ENCODE measurements at regions of chr22 and their contacts with region 1.

Region 1: GRCh38 chr22:19909350-19910179 is 32.0 kb upstream of the COMT start:
- DNase-seq: peak; percentile 88
- ATAC-seq: peak; percentile 87
- H3K4me3 Mint-ChIP-seq: no peak overlapping the region
- H3K27ac Mint-ChIP-seq: peak overlapping the region; percentile 12
- H3K4me1 Mint-ChIP-seq: no peaks in the 10 kb centered on the region
- H3K27me3 Mint-ChIP-seq: no peaks in the 10 kb centered on the region

Region 2: DNA sequence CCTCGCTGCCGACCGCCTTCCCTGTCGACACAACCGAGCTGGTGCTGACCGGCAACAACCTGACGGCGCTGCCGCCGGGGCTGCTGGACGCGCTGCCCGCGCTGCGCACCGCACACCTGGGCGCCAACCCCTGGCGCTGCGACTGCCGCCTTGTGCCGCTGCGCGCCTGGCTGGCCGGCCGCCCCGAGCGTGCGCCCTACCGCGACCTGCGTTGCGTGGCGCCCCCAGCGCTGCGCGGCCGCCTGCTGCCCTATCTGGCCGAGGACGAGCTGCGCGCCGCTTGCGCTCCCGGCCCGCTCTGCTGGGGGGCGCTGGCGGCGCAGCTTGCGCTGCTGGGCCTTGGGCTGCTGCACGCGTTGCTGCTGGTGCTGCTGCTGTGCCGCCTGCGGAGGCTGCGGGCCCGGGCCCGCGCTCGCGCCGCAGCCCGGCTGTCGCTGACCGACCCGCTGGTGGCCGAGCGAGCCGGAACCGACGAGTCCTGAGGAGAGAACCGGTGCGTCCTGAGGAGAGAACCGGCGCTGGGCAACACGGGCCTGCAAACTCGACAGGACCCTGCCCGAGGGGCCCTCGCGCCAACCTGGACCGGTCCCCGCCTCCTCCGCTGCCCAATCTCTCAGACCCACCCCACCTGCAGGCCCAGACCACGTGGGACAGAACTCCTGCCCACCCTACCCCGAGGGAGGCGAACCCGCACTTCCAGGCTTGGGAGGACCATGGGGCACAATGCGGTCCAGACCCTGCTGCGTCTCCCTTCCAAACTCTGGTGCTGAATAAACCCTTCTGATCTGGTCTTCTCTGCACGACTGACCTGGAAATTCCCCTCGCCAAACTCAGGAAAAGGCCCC is 185.4 kb before region 1 on chr22:
- CTCF ChIA-PET with region 1: interaction called, 10 read pairs
- POLR2A ChIA-PET with region 1: no interaction called
- DNase-seq: peak; percentile 38
- ATAC-seq: peak; percentile 71
- H3K4me3 Mint-ChIP-seq: peak overlapping the region; percentile 29
- H3K27ac Mint-ChIP-seq: no peak overlapping the region
- H3K4me1 Mint-ChIP-seq: peaks cover 9% of the 10 kb centered on the region
- H3K27me3 Mint-ChIP-seq: peaks cover 36% of the 10 kb centered on the region

Region 3: DNA sequence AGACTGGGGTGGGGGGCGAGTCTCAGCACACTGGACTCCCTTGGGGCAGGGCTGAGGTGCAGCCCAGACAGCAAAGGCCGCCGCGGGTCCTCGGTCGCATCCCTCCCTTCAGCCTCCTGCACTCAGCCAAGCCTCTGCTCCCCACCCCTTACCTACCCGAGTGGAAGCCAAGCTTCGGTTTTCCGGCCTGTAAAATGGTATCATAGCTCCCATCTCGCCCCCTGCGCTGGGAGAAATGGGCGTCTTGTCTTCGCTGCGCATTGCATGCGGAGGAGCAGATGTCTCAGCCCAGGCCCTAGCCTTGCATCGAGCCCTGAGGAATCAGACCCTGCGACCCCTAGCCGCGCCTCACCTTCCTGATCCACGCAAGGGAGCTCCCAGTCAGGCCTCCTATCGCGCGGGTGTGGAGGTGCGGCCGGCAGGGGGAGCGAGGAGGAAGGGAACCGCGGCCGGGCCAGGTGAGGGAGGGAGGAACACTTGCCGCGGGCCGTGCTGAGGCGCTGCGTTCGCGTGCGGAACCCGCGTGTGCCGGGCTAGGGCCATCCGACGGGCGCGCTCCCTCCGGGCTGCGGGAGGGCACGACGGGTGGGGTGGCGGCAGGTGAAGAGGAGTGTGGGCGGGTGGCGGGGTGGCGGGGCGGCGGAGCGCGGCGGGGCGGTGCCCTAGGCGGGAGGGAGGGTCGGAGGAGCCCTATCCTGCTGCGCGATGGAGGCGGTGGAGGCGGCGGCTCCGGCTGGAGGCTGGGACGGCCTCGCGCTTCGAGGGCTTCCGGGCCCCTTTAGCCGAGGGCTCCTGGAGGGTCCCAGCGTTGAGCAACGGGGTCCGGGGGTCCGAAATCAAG is 153.1 kb before region 1 on chr22:
- CTCF ChIA-PET with region 1: interaction called, 20 read pairs
- POLR2A ChIA-PET with region 1: no interaction called
- DNase-seq: peak; percentile 77
- ATAC-seq: peak; percentile 69
- H3K4me3 Mint-ChIP-seq: no peak overlapping the region
- H3K27ac Mint-ChIP-seq: no peak overlapping the region
- H3K4me1 Mint-ChIP-seq: peaks cover 24% of the 10 kb centered on the region
- H3K27me3 Mint-ChIP-seq: peaks cover 62% of the 10 kb centered on the region

Region 4: DNA sequence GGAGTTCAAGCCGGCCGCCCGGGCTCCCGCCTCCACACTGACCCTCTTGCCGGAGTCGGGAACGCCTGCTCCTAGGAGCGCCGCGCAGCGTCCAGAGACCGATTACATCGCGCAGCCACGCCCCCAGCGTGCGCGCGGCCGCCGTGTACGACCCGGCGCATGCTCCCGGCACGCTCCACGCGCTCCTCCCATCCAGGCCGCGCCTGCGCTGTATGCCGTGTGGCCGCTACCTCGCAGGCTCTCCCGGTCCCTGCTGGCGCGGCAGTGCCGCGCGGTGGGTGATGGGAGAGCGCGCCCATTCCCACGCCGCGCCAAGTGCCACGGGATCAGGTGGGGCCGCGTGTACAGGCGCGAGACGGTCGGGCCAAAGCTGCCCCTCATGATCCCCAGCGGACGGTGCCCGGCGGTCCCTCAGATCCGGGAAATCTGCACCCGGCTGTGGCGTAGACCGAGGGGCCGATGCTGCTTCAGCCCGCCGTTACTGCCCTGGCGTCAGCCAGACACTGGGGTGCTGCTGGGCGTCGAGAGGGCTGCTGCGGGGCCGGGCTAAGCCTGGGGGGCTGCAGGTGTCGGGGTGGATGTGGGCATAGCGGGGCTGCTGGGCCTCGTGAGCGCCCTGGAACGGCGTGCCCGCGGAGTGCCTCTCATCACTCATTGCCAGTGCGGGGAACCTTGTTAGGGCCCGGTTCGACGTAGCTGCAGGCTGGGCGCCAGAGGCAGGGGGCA is 54.6 kb before region 1 on chr22 and contains the starts of genes GNB1L and RTL10:
- CTCF ChIA-PET with region 1: interaction called, 11 read pairs
- POLR2A ChIA-PET with region 1: no interaction called
- DNase-seq: peak; percentile 96
- ATAC-seq: peak; percentile 95
- H3K4me3 Mint-ChIP-seq: peak within 1 kb of the TSS; percentile 94
- H3K27ac Mint-ChIP-seq: peak within 1 kb of the TSS; percentile 97
- H3K4me1 Mint-ChIP-seq: peaks cover 34% of the 10 kb centered on the region
- H3K27me3 Mint-ChIP-seq: no peaks in the 10 kb centered on the region
- total RNA-seq, gene GNB1L: 9.7 to 10.3 TPM
- total RNA-seq, gene RTL10: 16.1 to 17.0 TPM

Region 5: DNA sequence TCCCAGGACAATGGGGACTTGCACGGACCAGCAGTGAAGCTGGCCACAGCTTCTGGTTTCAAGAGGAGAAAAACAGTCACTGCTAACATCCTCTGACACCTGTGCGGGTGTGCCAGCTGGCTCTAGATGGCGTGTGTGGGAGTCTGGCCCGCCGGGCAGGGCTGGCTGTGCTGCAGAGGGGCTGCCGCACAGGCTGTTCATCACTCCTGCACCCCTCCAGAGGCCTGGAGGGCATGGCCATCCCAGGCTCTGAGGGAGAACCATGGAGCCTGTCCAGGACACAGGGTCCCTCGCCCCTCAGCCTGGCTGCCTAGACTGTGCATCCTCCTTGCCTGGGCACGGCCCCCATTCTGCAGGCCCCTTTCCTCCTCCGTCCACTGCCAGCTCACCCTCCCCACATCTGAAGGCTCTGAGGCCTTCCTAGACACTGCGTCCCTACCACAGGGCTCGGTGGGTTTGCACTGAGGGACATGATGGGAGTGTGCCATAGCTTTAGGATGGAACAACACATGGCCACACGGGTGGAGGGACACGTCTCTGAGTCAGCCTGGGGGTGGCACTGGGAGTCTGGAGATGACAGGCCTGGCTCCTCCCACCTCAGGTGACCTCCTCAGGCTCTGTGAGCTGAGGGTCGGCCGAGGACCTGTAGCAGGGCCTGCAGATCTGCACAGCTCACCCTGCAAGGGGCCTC is 12.8 kb before region 1 on chr22:
- CTCF ChIA-PET with region 1: interaction called, 17 read pairs
- POLR2A ChIA-PET with region 1: no interaction called
- DNase-seq: peak; percentile 33
- ATAC-seq: no peak
- H3K4me3 Mint-ChIP-seq: no peak overlapping the region
- H3K27ac Mint-ChIP-seq: peak overlapping the region; percentile 20
- H3K4me1 Mint-ChIP-seq: peaks cover 30% of the 10 kb centered on the region
- H3K27me3 Mint-ChIP-seq: no peaks in the 10 kb centered on the region

Region 6: DNA sequence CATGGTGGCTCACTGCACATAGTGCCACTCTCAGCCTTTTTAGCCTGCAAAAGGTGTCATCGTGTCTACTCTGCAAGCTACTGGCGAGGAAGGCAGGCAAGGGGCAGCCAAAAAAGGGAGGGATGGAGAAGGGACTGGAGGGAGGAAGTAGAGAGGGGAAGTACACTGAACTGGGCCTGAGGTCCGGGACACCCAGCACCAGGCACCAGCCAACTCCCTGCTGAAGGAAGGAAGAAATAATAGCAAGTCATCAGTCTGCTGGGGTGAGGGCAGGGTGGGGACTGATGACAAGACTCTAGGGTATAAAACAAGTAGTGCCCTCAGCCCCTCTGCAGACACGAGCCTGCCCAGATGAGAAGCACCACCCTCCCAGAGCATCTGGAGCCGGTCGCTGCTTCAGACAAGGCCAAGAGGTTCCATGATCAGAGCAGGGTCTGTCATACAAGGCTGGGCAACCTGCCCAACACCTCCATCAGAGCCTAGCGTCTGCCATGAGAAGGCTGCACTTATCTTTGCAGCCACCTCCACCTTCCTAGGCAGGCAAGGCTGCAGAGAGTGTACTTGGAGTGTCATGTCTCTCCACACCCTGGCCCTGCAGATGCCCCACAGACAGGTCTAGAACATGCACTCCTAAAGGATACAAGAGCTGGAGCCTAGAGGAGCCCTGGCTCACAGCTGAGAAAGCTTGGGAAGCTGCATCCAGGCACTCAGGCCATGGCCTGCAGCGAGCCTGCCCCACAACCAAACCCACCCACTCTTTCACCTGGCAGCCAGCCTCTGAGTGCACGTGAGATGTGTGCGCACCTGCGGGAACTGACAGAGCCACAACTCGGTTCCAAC is 23.0 kb after region 1 on chr22:
- CTCF ChIA-PET with region 1: no interaction called
- POLR2A ChIA-PET with region 1: no interaction called
- DNase-seq: no peak
- ATAC-seq: no peak
- H3K4me3 Mint-ChIP-seq: no peak overlapping the region
- H3K27ac Mint-ChIP-seq: no peak overlapping the region
- H3K4me1 Mint-ChIP-seq: no peaks in the 10 kb centered on the region
- H3K27me3 Mint-ChIP-seq: no peaks in the 10 kb centered on the region

Measured in activated CD8-positive, alpha-beta T cell treated with anti-CD3 and anti-CD28 coated beads, Interleukin-2, amount 10 ng/mL, durations not matched to agents 7 days and 5 days (primary cell).